ENCODE measurements at regions of chr16 and their contacts with region 1.

Region 1: DNA sequence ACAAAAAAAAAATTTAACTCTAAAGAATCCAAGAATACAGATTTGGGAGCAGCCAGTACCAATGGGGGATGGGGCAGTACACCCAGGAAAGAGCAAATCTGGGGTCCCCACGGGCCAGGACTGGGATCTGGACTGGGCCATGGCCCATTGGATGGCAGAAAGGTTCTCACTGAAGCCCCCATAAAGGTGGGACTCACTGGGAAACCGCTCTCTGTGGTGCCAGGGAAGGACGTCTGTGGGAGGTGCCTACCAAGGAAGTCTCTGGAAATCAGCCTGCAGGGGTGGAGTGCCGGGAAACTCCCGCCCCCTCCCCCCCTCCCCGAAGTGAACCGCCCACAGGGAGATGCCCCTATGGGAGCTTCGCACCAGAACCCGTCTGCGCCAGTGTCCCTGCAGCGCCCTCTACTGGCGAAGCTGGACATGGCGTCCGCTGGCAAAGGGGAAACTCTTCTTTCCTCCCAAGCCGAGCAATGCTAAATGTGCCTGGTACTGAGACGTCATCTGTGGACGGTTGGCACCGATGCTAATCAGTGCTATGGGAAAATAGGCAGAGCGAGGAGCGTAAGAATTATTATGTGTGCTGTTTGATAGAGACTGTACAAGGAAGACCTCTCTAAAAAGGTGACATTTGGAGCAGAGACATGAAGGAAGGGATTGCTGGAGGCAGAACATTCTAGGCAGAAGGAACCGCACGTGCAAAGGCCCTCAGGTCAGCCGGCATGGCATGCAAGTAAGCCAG is 671.1 kb downstream of the WWOX start:
- DNase-seq: peak; percentile 70
- ATAC-seq: peak; percentile 79
- H3K4me3 Mint-ChIP-seq: no peak overlapping the region
- H3K27ac Mint-ChIP-seq: no peak overlapping the region
- H3K4me1 Mint-ChIP-seq: peaks cover 28% of the 10 kb centered on the region
- H3K27me3 Mint-ChIP-seq: no peaks in the 10 kb centered on the region
- CTCF ChIP-seq: peak; percentile 58

Region 2: DNA sequence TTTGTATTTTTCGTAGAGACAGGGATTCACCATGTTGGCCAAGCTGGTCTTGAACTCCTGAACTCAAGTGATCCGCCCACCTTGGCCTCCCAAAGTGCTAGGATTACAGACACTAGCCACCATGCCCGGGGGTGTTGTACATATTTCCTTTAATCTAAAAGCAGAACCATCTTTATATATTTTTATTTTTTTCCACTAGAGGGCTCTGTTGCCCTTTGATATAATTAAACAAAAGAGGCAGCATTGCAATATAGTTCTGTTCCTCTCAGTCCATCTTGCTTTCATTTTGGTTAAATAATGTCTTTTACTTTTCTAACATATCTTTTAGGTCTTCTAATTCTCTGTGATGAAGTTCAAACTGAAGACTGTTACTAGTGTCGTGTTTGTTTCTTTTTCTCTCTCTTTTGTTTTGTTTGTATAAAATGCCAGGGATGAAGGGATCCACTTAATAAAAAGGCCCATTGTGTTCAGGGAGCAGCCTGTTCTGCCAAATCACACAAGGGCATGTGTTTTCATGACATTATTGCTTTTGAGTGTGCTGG is 647.7 kb before region 1 on chr16:
- CTCF ChIA-PET with region 1: interaction called, 6 read pairs
- POLR2A ChIA-PET with region 1: no interaction called
- intact Hi-C with region 1: loop called (anchors 1 kb)
- DNase-seq: no peak
- ATAC-seq: peak; percentile 58
- H3K4me3 Mint-ChIP-seq: no peak overlapping the region
- H3K27ac Mint-ChIP-seq: no peak overlapping the region
- H3K4me1 Mint-ChIP-seq: peaks cover 3% of the 10 kb centered on the region
- H3K27me3 Mint-ChIP-seq: no peaks in the 10 kb centered on the region
- CTCF ChIP-seq: no peak

Region 3: DNA sequence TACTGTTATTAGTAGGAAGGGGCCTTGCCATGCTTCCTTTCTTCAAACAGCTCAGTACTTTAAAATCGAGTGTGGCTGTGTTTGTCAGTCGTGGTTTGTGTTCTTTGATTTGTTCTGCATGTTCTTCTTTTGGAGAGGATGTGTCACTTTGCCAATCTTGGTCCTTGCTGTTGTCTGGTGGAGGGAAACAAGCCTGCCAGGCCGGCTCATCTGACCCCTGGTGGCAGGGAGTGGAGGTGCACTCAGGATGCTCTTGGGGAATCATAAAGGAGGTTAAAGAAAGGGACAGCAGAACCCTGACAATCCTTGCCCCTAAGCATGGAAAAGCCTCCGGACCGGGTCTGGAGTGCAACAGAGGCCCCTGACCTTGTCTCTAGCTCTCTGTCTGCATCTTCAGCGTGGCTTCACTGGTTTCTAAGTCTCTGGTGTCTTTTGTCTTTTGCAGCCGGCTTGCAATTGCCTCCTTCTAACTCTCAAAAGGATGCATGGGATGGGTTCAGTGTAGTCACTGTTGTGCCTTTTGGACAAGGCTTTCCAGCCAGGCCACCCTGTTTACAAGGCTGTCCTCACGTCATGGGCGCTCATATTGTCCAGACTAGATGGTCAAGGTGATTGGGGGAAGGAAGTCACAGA is 535.2 kb before region 1 on chr16:
- CTCF ChIA-PET with region 1: no interaction called
- POLR2A ChIA-PET with region 1: no interaction called
- intact Hi-C with region 1: loop called (anchors 10 kb)
- DNase-seq: peak; percentile 45
- ATAC-seq: peak; percentile 75
- H3K4me3 Mint-ChIP-seq: no peak overlapping the region
- H3K27ac Mint-ChIP-seq: no peak overlapping the region
- H3K4me1 Mint-ChIP-seq: no peaks in the 10 kb centered on the region
- H3K27me3 Mint-ChIP-seq: no peaks in the 10 kb centered on the region
- CTCF ChIP-seq: peak; percentile 74

Region 4: GRCh38 chr16:78503602-78504001 is 266.9 kb before region 1 on chr16:
- CTCF ChIA-PET with region 1: interaction called, 18 read pairs
- POLR2A ChIA-PET with region 1: no interaction called
- intact Hi-C with region 1: no loop called
- DNase-seq: no peak
- ATAC-seq: no peak
- H3K4me3 Mint-ChIP-seq: no peak overlapping the region
- H3K27ac Mint-ChIP-seq: no peak overlapping the region
- H3K4me1 Mint-ChIP-seq: no peaks in the 10 kb centered on the region
- H3K27me3 Mint-ChIP-seq: no peaks in the 10 kb centered on the region
- CTCF ChIP-seq: peak; percentile 31

Region 5: GRCh38 chr16:78705694-78706093 is 64.8 kb before region 1 on chr16:
- CTCF ChIA-PET with region 1: interaction called, 10 read pairs
- POLR2A ChIA-PET with region 1: no interaction called
- intact Hi-C with region 1: loop called (anchors 1 kb)
- DNase-seq: no peak
- ATAC-seq: no peak
- H3K4me3 Mint-ChIP-seq: no peak overlapping the region
- H3K27ac Mint-ChIP-seq: no peak overlapping the region
- H3K4me1 Mint-ChIP-seq: peaks cover 3% of the 10 kb centered on the region
- H3K27me3 Mint-ChIP-seq: no peaks in the 10 kb centered on the region
- CTCF ChIP-seq: no peak

Region 6: DNA sequence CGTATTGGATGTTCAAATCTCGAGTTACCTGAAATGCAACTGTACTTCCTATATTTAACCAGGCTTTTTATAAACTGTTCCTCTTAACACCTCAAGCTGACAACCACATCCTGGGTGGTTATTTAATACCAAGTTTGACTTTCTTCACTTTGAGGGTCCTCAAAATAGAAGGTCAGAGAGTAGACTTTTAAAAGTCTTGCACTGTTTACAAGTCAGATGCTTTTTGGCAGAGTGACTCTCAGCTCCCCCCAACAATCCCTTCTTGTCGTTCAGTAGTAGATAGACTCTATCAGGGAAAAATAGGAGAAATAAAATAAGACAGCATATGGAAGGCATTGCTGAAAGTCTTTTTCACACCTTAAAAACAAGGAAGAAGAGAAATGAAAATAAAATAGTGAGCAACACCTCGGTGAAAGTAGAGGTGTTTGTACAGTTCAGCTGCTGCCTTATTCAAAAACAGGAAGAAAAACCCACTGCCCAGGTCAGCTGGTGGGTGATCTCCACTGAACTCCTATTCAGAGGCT is 20.7 kb before region 1 on chr16:
- CTCF ChIA-PET with region 1: interaction called, 5 read pairs
- POLR2A ChIA-PET with region 1: interaction called, 3 read pairs
- intact Hi-C with region 1: loop called (anchors 2 kb)
- DNase-seq: no peak
- ATAC-seq: peak; percentile 57
- H3K4me3 Mint-ChIP-seq: peak overlapping the region; percentile 51
- H3K27ac Mint-ChIP-seq: peak overlapping the region; percentile 87
- H3K4me1 Mint-ChIP-seq: peaks cover 74% of the 10 kb centered on the region
- H3K27me3 Mint-ChIP-seq: no peaks in the 10 kb centered on the region
- CTCF ChIP-seq: no peak

Region 7: GRCh38 chr16:79047229-79047983 is 276.9 kb after region 1 on chr16:
- CTCF ChIA-PET with region 1: no interaction called
- POLR2A ChIA-PET with region 1: no interaction called
- intact Hi-C with region 1: loop called (anchors 10 kb)
- DNase-seq: no peak
- ATAC-seq: peak; percentile 50
- H3K4me3 Mint-ChIP-seq: no peak overlapping the region
- H3K27ac Mint-ChIP-seq: no peak overlapping the region
- H3K4me1 Mint-ChIP-seq: no peaks in the 10 kb centered on the region
- H3K27me3 Mint-ChIP-seq: no peaks in the 10 kb centered on the region
- CTCF ChIP-seq: peak; percentile 47